Caco-2 (cell line): ENCODE measurements at regions of chr7 and their contacts with region 1.

Region 1: GRCh38 chr7:90155206-90155605 is 937 bp downstream of the STEAP1 start:
- DNase-seq: no peak
- H3K4me3 ChIP-seq: peak overlapping the region; percentile 87
- H3K4me3 Mint-ChIP-seq: peak overlapping the region; percentile 93
- H3K27ac Mint-ChIP-seq: peak overlapping the region; percentile 89
- H3K4me1 ChIP-seq: peaks cover 8% of the 10 kb centered on the region; the same call in 1 of the 2 replicates
- H3K4me1 Mint-ChIP-seq: no peaks in the 10 kb centered on the region
- H3K27me3 ChIP-seq: no peaks in the 10 kb centered on the region
- H3K27me3 Mint-ChIP-seq: no peaks in the 10 kb centered on the region
- CTCF ChIP-seq: no peak

Region 2: GRCh38 chr7:89988074-89988473 is 167.1 kb before region 1 on chr7:
- CTCF ChIA-PET with region 1: no interaction called
- POLR2A ChIA-PET with region 1: no interaction called
- intact Hi-C with region 1: no loop called
- DNase-seq: no peak
- H3K4me3 ChIP-seq: no peak overlapping the region
- H3K4me3 Mint-ChIP-seq: no peak overlapping the region
- H3K27ac Mint-ChIP-seq: no peak overlapping the region
- H3K4me1 ChIP-seq: no peaks in the 10 kb centered on the region
- H3K4me1 Mint-ChIP-seq: no peaks in the 10 kb centered on the region
- H3K27me3 ChIP-seq: no peaks in the 10 kb centered on the region
- H3K27me3 Mint-ChIP-seq: no peaks in the 10 kb centered on the region
- CTCF ChIP-seq: no peak

Region 3: DNA sequence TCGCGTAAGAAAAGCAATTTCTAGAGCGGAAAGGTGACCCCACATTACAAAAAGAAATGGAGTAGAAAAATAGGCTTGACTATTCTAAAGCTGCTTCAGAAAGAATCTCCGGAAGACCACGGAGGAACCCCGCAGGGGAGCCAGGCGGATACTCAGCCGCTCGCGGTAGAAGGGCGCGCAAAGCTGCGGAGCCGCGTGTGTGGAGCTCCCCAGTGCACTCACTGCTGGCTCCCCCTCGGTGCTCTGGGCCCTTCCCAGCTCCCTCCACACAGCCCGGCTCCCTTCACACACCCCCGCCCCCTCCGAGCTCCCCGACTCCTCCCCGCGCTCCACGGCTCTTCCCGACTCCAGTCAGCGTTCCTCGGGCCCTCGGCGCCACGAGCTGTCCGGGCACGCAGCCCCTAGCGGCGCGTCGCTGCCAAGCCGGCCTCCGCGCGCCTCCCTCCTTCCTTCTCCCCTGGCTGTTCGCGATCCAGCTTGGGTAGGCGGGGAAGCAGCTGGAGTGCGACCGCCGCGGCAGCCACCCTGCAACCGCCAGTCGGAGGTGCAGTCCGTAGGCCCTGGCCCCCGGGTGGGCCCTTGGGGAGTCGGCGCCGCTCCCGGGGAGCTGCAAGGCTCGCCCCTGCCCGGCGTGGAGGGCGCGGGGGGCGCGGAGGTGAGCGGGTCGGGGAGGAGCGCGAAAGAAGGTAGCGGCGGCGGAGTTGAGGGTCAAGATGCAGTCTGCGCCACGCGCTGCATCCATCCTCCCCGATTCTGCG is 56.4 kb after region 1 on chr7 and contains the start of gene STEAP2:
- CTCF ChIA-PET with region 1: interaction called, 10 read pairs
- POLR2A ChIA-PET with region 1: no interaction called
- intact Hi-C with region 1: loop called (anchors 1 kb)
- DNase-seq: peak; percentile 93 to 94
- H3K4me3 ChIP-seq: peak within 1 kb of the TSS; percentile 67
- H3K4me3 Mint-ChIP-seq: no peak within 1 kb of the TSS
- H3K27ac Mint-ChIP-seq: peak within 1 kb of the TSS; percentile 85
- H3K4me1 ChIP-seq: 0 out of 2 replicates have a peak, but pooled peaks cover 8% of the 10 kb centered on the region
- H3K4me1 Mint-ChIP-seq: no peaks in the 10 kb centered on the region
- H3K27me3 ChIP-seq: no peaks in the 10 kb centered on the region
- H3K27me3 Mint-ChIP-seq: no peaks in the 10 kb centered on the region
- CTCF ChIP-seq: peak; percentile 71 to 80
- total RNA-seq, gene STEAP2: 12.7 and 13.5 TPM in 2 replicates

Region 4: GRCh38 chr7:90262438-90262837 is 107.2 kb after region 1 on chr7:
- CTCF ChIA-PET with region 1: interaction called, 4 read pairs
- POLR2A ChIA-PET with region 1: no interaction called
- intact Hi-C with region 1: loop called (anchors 1 kb)
- DNase-seq: peak in 1 of 2 experiments; percentile 24
- H3K4me3 ChIP-seq: no peak overlapping the region
- H3K4me3 Mint-ChIP-seq: no peak overlapping the region
- H3K27ac Mint-ChIP-seq: no peak overlapping the region
- H3K4me1 ChIP-seq: peaks cover 9% of the 10 kb centered on the region
- H3K4me1 Mint-ChIP-seq: no peaks in the 10 kb centered on the region
- H3K27me3 ChIP-seq: no peaks in the 10 kb centered on the region
- H3K27me3 Mint-ChIP-seq: no peaks in the 10 kb centered on the region
- CTCF ChIP-seq: peak; percentile 45 to 48

Region 5: DNA sequence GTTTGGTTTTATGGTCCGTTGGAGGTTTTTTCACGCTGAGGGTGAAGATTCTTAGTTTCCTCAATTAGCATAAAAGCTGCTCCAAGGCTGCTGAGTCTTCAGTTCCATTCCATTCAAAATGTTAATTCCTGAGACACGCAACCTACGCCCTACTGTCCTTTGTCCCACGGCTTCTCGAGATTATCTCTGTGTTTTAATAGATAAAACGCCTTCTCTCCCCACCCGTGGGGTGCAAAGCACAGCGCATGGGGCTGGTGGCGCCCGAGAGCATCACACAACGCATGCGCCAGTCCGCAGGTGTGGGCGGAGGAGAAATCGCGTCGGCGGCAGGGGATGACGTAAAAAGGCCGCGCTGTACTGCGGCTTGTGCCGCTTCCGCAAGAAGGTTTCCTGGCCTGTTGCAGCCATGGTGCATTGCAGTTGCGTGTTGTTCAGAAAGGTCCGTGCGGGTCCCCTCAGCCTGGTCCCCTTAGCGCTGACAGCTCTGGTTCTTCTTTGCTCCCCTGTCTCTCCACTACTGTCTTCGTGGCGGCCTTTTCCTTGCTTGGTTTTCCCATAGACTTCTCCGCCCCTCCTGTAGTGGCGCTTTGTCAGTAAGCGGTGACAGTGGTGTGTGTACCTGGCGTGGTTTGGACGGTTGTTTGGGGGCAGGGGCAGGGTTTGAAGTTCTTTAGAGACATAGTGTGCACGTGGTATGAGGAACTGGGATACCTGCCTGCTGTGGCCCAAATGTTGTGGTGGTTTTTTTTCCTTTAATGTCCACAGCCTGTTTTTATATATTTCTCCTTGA is 191.3 kb after region 1 on chr7 and contains the start of gene GTPBP10:
- CTCF ChIA-PET with region 1: no interaction called
- POLR2A ChIA-PET with region 1: no interaction called
- intact Hi-C with region 1: loop called (anchors 5 kb)
- DNase-seq: peak; percentile 93 to 94
- H3K4me3 ChIP-seq: peak within 1 kb of the TSS; percentile 86
- H3K4me3 Mint-ChIP-seq: peak within 1 kb of the TSS; percentile 86
- H3K27ac Mint-ChIP-seq: peak within 1 kb of the TSS; percentile 94
- H3K4me1 ChIP-seq: peaks cover 15% of the 10 kb centered on the region
- H3K4me1 Mint-ChIP-seq: peaks cover 32% of the 10 kb centered on the region
- H3K27me3 ChIP-seq: no peaks in the 10 kb centered on the region
- H3K27me3 Mint-ChIP-seq: no peaks in the 10 kb centered on the region
- CTCF ChIP-seq: peak; percentile 67 to 82
- total RNA-seq, gene GTPBP10: 42.7 and 45.2 TPM in 2 replicates

Region 6: GRCh38 chr7:90424720-90425119 is 269.5 kb after region 1 on chr7:
- CTCF ChIA-PET with region 1: interaction called, 7 read pairs
- POLR2A ChIA-PET with region 1: no interaction called
- intact Hi-C with region 1: loop called (anchors 1 kb)
- DNase-seq: no peak
- H3K4me3 ChIP-seq: no peak overlapping the region
- H3K4me3 Mint-ChIP-seq: no peak overlapping the region
- H3K27ac Mint-ChIP-seq: no peak overlapping the region
- H3K4me1 ChIP-seq: no peaks in the 10 kb centered on the region
- H3K4me1 Mint-ChIP-seq: no peaks in the 10 kb centered on the region
- H3K27me3 ChIP-seq: no peaks in the 10 kb centered on the region
- H3K27me3 Mint-ChIP-seq: no peaks in the 10 kb centered on the region
- CTCF ChIP-seq: no peak

Region 7: DNA sequence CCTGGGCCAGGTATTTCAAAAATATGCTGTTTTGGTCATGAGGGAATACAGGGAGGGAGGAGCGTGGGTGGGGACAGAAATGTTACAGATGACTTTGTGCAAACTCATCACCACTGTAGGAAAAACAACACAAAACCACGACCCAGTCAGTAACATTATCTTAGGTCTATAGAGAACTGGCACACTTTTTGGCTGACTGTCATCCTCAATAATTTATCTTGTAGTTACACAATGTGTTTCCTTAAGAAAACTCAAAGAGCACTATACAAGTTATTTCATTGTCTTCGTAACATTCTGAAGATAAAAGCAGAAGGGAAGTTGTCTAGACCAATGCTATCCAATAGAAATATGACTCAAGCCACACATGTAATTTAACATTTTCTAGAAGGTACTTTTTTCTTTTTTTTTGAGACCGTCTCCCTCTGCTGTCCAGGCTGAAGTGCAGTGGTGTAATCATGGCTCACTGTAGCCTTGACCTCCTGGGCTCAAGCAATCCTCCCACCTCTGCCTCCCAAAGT is 424.0 kb after region 1 on chr7:
- CTCF ChIA-PET with region 1: no interaction called
- POLR2A ChIA-PET with region 1: no interaction called
- intact Hi-C with region 1: no loop called
- DNase-seq: peak in 1 of 2 experiments; percentile 34
- H3K4me3 ChIP-seq: no peak overlapping the region
- H3K4me3 Mint-ChIP-seq: no peak overlapping the region
- H3K27ac Mint-ChIP-seq: no peak overlapping the region
- H3K4me1 ChIP-seq: peaks cover 27% of the 10 kb centered on the region
- H3K4me1 Mint-ChIP-seq: peaks cover 7% of the 10 kb centered on the region
- H3K27me3 ChIP-seq: no peaks in the 10 kb centered on the region
- H3K27me3 Mint-ChIP-seq: no peaks in the 10 kb centered on the region
- CTCF ChIP-seq: no peak